ENCODE measurements at regions of chr12 and their contacts with region 1.

Region 1: GRCh38 chr12:57487597-57488401 is at the start of gene MARS1:
- DNase-seq: peak; percentile 71 to 95 (median 93)
- ATAC-seq: peak; percentile 99
- H3K4me3 ChIP-seq: peak within 1 kb of the TSS; percentile 89
- H3K4me3 Mint-ChIP-seq: peak within 1 kb of the TSS; percentile 89 to 100 (median 98)
- H3K27ac ChIP-seq: peak within 1 kb of the TSS; percentile 86
- H3K27ac Mint-ChIP-seq: peak within 1 kb of the TSS; percentile 86 to 99 (median 96)
- H3K4me1 ChIP-seq: peaks cover 17 to 21% of the 10 kb centered on the region in 2 donors
- H3K4me1 Mint-ChIP-seq: peaks cover 21 to 48% (median 40%) of the 10 kb centered on the region in 7 donors
- H3K27me3 ChIP-seq: no peaks in the 10 kb centered on the region
- H3K27me3 Mint-ChIP-seq: peaks cover 0 to 2% (median 0%) of the 10 kb centered on the region in 5 donors
- total RNA-seq, gene MARS1: 178 to 229 (median 197) TPM

Region 2: DNA sequence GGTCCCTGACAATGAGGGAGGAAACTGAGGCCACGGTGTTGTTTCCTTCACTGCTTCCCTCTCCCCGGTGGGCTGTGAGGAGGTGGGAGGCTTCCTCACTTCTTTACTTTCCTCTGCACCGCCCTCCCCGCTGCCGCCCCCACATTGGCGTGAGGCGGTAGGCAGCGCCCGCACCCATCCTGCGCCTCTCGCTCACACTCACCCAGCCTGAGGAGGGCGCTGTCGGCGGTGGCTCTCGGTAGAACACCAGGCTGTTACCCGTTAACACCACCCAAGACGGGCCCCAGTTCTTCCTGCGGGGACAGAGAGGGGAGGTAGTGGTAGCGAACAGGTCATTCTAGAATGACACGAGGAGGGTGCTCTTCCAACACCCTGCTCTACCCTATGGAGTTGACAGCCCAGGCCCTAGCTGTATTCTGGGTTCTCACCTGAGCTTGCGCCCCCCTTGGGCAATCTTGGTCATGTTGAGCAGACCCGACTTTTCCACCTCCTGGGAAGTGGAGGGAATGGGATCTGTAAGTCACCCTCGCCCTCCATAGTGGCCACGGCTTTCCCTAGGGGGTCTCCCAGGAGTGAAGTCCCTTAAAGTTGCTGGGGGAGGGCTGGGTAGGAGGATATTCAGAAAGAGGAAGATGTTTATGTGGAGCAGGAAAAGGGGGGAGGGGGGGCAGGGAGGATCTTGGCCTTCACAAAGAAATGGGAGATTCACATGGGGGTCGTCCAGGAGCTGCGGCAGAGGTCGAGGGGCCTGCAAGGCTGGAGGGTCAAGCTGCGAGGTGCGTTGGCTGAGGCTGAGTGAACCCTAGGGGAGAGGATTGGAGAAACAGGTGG is 11.4 kb before region 1 on chr12:
- CTCF ChIA-PET with region 1: interaction called, 9 read pairs
- POLR2A ChIA-PET with region 1: interaction called, 52 read pairs
- intact Hi-C with region 1: loop called (anchors 1 kb)
- DNase-seq: peak; percentile 58 to 85 (median 70)
- ATAC-seq: peak; percentile 53
- H3K4me3 ChIP-seq: peak overlapping the region; percentile 95
- H3K4me3 Mint-ChIP-seq: peak overlapping the region; percentile 84 to 100 (median 98)
- H3K27ac ChIP-seq: peak overlapping the region; percentile 94
- H3K27ac Mint-ChIP-seq: peak overlapping the region; percentile 97 to 100 (median 100)
- H3K4me1 ChIP-seq: peaks cover 59 to 70% of the 10 kb centered on the region in 2 donors
- H3K4me1 Mint-ChIP-seq: peaks cover 66 to 85% (median 76%) of the 10 kb centered on the region in 7 donors
- H3K27me3 ChIP-seq: no peaks in the 10 kb centered on the region
- H3K27me3 Mint-ChIP-seq: no peaks in the 10 kb centered on the region

Region 3: GRCh38 chr12:57530396-57531142 is 42.8 kb after region 1 on chr12:
- CTCF ChIA-PET with region 1: interaction called, 10 read pairs
- POLR2A ChIA-PET with region 1: no interaction called
- intact Hi-C with region 1: no loop called
- DNase-seq: no peak
- ATAC-seq: no peak
- H3K4me3 ChIP-seq: no peak overlapping the region
- H3K4me3 Mint-ChIP-seq: no peak overlapping the region
- H3K27ac ChIP-seq: no peak overlapping the region
- H3K27ac Mint-ChIP-seq: peak overlapping the region in 3 of 9 donors; percentile 21 to 41 (median 22)
- H3K4me1 ChIP-seq: no peaks in the 10 kb centered on the region
- H3K4me1 Mint-ChIP-seq: peaks cover 0 to 4% (median 0%) of the 10 kb centered on the region in 7 donors
- H3K27me3 ChIP-seq: no peaks in the 10 kb centered on the region
- H3K27me3 Mint-ChIP-seq: no peaks in the 10 kb centered on the region

Region 4: GRCh38 chr12:57546438-57547383 is 58.9 kb after region 1 on chr12 and contains the start of gene DCTN2:
- CTCF ChIA-PET with region 1: no interaction called
- POLR2A ChIA-PET with region 1: interaction called, 3 read pairs
- intact Hi-C with region 1: loop called (anchors 1 kb)
- DNase-seq: peak; percentile 63 to 94 (median 88)
- ATAC-seq: peak; percentile 98
- H3K4me3 ChIP-seq: peak within 1 kb of the TSS; percentile 74
- H3K4me3 Mint-ChIP-seq: peak within 1 kb of the TSS; percentile 88 to 100 (median 98)
- H3K27ac ChIP-seq: peak within 1 kb of the TSS; percentile 88
- H3K27ac Mint-ChIP-seq: peak within 1 kb of the TSS; percentile 85 to 96 (median 92)
- H3K4me1 ChIP-seq: peaks cover 10 to 16% of the 10 kb centered on the region in 2 donors
- H3K4me1 Mint-ChIP-seq: peaks cover 28 to 64% (median 55%) of the 10 kb centered on the region in 7 donors
- H3K27me3 ChIP-seq: no peaks in the 10 kb centered on the region
- H3K27me3 Mint-ChIP-seq: peaks cover 0 to 28% (median 0%) of the 10 kb centered on the region in 5 donors
- total RNA-seq, gene DCTN2: 52.1 to 78.8 (median 63.0) TPM

Measured in naive thymus-derived CD4-positive, alpha-beta T cell (primary cell).